Activated T-helper 1 cell treated with anti-CD3 and anti-CD28 coated beads, Interleukin-12 subunit alpha, Interleukin-12 subunit beta, Interleukin-2, Interleukin-4 antibody, amounts not matched to agents 30 ng/mL and 10 ng/mL and 1 ng/mL, durations not matched to agents 14 hours and 24 hours and 36 hours (primary cell): ENCODE measurements at regions of chr7 and their contacts with region 1.

Region 1: DNA sequence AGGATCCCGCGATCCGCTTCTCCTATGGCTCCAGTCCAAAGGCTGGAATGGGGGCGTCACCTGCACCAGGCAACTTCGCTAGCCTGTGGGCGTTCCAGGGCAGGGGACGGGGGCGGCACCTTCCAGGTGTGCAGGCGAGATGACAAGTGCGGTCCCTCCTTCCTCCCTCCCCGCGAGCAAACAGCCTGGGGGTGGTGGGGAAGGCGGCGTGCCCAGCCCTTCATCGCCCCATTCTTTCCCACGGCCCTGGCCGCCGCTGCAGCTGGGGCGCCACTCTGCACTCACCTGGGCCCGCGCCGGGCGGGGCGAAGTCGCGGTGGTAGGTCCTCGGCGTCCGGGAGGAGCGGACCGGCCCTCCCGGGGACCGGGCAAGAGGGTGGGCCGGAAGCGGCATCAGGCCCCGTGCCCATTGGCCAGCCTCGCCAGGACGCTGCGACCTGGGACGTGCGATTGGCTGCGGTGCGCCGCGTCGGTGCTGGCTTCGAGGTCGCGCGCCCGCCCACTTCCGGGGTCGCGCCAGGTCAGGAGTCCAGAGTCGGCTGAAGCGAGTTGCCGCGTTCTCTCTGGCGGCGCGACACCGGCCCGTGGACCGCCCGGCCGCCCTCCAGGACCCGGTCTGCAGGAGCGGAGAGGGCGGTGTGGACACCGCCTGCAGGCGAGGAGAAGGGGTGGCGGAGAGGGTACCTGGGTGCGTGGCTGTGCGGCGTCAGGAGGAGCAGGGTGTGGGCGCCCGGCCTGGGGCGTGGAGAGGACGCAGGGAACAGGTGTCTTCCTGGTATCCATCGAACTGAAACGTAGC is at the start of gene TECPR1:
- DNase-seq: peak; percentile 91
- H3K4me3 Mint-ChIP-seq: peak within 1 kb of the TSS; percentile 98
- H3K27ac Mint-ChIP-seq: peak within 1 kb of the TSS; percentile 99
- H3K4me1 Mint-ChIP-seq: peaks cover 44% of the 10 kb centered on the region
- H3K27me3 Mint-ChIP-seq: no peaks in the 10 kb centered on the region
- total RNA-seq, gene TECPR1: 49.1 and 53.6 TPM in 2 replicates

Region 2: GRCh38 chr7:97971990-97972943 is 279.8 kb before region 1 on chr7:
- intact Hi-C with region 1: loop called (anchors 5 kb)
- DNase-seq: peak; percentile 80
- H3K4me3 Mint-ChIP-seq: peak overlapping the region; percentile 99
- H3K27ac Mint-ChIP-seq: peak overlapping the region; percentile 94
- H3K4me1 Mint-ChIP-seq: peaks cover 13% of the 10 kb centered on the region
- H3K27me3 Mint-ChIP-seq: peaks cover 4% of the 10 kb centered on the region

Region 3: GRCh38 chr7:98202367-98203195 is 49.5 kb before region 1 on chr7:
- intact Hi-C with region 1: loop called (anchors 1 kb)
- DNase-seq: peak; percentile 61
- H3K4me3 Mint-ChIP-seq: peak overlapping the region; percentile 56
- H3K27ac Mint-ChIP-seq: peak overlapping the region; percentile 32
- H3K4me1 Mint-ChIP-seq: peaks cover 38% of the 10 kb centered on the region
- H3K27me3 Mint-ChIP-seq: no peaks in the 10 kb centered on the region

Region 4: DNA sequence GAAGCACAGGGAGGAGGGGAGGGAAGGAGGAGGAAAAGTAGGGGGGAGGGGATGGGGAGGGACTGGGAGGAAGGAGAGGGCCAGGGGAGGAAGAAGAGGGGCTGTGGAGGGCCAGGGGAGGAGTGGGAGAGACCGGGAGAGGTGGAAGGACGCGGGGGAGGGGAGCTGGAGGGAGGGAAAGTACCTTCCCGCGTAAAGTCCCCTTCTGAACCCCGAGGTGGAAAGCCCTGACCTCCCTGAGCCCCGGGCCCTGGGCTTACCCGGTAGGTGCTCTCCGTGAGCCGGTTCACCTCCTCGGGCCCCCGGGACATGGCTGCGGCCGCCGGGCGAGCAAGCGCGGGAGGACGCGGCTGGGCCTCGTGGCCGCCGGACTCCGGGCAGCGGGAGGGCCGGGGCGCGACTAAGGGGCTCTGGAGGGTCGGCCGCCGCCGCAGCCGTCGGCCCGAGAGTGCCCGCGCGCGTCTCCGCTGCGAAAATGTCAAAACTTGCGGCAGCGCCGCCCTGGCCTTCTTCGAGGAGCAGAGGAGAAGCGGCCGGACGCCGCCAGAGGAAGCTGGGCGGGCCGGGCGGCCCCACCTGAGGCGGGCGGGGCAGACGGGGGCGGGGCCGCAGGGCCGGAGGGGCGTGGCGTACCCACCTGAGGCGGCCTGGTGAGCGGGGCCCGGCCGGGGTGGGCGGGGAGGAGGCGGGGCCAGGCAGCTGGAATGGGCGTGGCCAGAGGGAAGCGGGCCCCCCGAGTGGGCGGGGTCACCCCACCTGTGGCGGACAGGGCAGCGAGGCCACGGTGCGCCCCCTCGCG is 148.7 kb after region 1 on chr7 and contains the start of gene BAIAP2L1:
- intact Hi-C with region 1: loop called (anchors 10 kb)
- DNase-seq: peak; percentile 56
- H3K4me3 Mint-ChIP-seq: peak within 1 kb of the TSS; percentile 33
- H3K27ac Mint-ChIP-seq: peak within 1 kb of the TSS; percentile 31
- H3K4me1 Mint-ChIP-seq: peaks cover 9% of the 10 kb centered on the region
- H3K27me3 Mint-ChIP-seq: peaks cover 29% of the 10 kb centered on the region
- total RNA-seq, gene BAIAP2L1: 1.7 and 2.7 TPM in 2 replicates